ENCODE measurements at regions of chr19 and their contacts with region 1.

Region 1: DNA sequence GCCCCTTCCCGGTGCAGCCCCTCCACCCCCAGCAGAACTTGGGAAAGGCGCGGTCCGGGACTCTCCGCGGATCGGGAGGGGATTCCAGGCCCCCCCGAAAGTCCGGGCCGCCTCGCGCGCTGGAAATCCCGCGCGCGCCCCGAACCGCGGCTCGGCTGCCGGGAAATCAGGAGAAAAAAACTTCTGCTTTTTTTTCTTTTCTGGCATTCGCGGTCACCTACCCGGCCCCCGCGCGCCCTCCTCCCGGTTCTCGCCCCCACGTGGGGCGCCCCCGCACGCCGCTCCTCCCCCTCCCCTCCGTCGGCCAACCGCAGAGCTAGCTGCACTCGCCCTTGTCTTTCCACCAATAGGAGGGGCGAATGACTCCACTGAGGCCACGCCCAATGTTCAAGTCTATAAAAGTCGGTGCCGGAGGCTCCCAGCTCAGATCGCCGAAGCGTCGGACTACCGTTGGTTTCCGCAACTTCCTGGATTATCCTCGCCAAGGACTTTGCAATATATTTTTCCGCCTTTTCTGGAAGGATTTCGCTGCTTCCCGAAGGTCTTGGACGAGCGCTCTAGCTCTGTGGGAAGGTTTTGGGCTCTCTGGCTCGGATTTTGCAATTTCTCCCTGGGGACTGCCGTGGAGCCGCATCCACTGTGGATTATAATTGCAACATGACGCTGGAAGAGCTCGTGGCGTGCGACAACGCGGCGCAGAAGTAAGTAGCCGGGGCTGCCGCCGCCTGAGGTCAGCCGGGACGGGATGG is at the start of gene GADD45B:
- DNase-seq: peak; percentile 97 to 98
- ATAC-seq: peak; percentile 76 to 85 (median 82)
- H3K4me3 ChIP-seq: peak within 1 kb of the TSS; percentile 81
- H3K27ac ChIP-seq: peak within 1 kb of the TSS; percentile 84
- H3K4me1 ChIP-seq: peaks cover 24% of the 10 kb centered on the region
- H3K27me3 ChIP-seq: no peaks in the 10 kb centered on the region
- CTCF ChIP-seq: no peak
- total RNA-seq, gene GADD45B: 10.9 to 63.1 (median 25.6) TPM

Region 2: DNA sequence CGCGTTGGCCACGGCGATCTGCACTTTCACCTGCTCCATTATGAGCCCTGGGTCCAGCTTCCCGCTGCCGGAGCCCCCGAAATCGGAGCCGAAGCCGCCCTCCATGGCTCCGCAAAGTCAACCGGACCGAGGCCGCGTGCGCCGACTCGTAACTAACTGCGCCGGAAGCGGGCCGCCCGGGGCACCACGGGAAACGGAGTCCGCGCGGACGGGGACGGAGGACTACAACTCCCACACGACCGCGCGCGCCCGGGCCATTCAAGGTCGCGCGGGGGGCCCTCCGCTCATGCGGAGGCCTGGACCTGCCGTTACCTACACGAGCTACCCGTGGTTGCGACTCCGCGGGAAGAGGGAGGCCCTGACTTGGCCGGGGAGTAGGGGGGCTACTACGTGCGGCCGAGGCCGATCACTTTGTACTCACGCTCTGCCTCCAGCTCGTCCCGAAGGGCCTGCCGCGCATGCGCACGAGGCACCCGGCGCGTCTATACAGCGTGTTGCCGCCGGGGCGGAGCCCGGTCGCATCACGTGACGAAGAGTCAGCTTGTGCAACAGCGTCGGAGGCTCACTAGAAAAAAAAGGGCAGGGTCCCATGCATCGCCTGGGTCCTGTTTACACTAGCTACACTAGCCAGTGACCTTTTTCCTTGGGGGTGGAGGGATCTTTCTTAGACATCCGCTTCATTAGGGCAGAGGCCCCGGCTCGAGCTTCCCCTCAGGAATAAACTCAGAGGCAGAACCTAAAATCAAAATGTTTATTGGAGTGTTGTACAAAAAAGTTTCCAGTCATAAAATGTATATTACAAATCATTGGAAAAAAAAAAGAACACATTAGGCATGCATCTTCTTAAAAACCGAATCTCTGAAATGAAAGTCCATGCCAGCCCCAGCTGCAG is 48.2 kb before region 1 on chr19 and contains the start of gene TIMM13:
- intact Hi-C with region 1: no loop called
- DNase-seq: peak; percentile 97 to 99
- ATAC-seq: peak; percentile 90 to 94 (median 92)
- H3K4me3 ChIP-seq: peak within 1 kb of the TSS; percentile 98
- H3K27ac ChIP-seq: peak within 1 kb of the TSS; percentile 96
- H3K4me1 ChIP-seq: peaks cover 32% of the 10 kb centered on the region
- H3K27me3 ChIP-seq: no peaks in the 10 kb centered on the region
- CTCF ChIP-seq: no peak
- total RNA-seq, gene TIMM13: 70.3 to 110 (median 92.2) TPM

Region 3: DNA sequence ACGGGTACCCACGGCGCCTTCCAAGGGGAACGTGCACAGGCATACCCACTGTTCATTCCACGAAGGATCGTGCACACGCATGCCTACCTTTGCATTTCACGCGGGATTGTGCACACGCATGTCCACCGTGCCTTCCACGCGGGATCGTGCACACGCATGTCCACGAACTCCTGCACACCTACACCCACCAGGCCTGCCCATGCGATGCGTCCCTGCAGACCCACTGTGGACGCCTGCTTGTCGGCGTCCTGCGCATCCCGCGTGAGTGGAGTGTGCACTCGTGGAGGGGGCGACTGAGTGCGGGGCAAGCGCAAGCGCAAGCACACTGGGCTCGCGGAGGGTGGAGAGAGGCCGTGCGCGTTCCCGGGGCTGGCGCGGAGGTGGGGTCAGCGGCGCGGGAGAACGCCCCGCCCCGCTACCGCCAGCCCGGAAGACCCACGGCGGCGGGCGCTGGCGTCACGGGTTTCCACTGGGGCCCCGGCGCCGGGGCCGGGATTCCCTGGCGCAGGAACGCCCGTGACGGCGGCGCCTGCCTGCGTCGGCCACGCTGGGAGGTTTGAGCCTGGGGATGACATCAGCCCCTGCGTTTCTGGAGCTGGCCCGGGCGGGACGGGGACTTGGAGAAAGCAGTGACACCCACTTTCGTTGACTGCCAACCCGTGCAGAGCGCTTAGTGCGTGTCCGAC is 18.7 kb after region 1 on chr19:
- intact Hi-C with region 1: loop called in 1 of 2 experiments (anchors 2 kb)
- DNase-seq: peak; percentile 83 to 88
- ATAC-seq: peak; percentile 31 to 64 (median 44)
- H3K4me3 ChIP-seq: peak overlapping the region; percentile 55
- H3K27ac ChIP-seq: peak overlapping the region; percentile 92
- H3K4me1 ChIP-seq: peaks cover 35% of the 10 kb centered on the region
- H3K27me3 ChIP-seq: no peaks in the 10 kb centered on the region
- CTCF ChIP-seq: no peak

Region 4: GRCh38 chr19:2543463-2544442 is 67.9 kb after region 1 on chr19:
- intact Hi-C with region 1: loop called (anchors 2 to 5 kb)
- DNase-seq: peak; percentile 97
- ATAC-seq: peak; percentile 76 to 84 (median 81)
- H3K4me3 ChIP-seq: peak overlapping the region; percentile 26
- H3K27ac ChIP-seq: peak overlapping the region; percentile 90
- H3K4me1 ChIP-seq: peaks cover 63% of the 10 kb centered on the region
- H3K27me3 ChIP-seq: no peaks in the 10 kb centered on the region
- CTCF ChIP-seq: peak; percentile 26

Region 5: DNA sequence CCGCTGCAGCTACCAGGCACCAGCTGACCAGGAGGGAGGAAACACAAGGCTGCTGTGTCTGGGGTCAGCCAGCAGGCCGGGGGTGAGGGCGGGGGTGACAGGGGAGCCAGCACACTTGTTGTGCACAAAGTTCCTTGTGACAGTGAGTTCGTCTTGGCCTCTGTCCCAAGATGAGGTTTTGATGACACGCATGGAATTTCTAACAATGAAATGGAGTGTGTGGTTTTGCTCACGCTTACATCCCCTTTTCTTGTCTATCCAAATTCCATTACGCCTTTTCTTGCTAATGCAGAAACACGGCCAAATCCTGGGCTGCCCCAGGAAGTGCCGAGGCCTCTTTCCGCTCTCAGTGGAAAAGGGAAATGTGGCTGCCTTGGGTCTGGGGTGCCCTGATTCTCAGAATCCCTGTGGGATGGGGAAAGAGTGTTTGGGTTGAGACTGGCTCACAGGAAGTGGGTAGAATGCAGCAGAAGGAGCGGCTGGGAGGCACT is 73.9 kb after region 1 on chr19:
- intact Hi-C with region 1: loop called in 1 of 2 experiments (anchors 5 kb)
- DNase-seq: peak; percentile 82 to 88
- ATAC-seq: peak in 2 of 4 donors; percentile 2 to 21
- H3K4me3 ChIP-seq: no peak overlapping the region
- H3K27ac ChIP-seq: peak overlapping the region; percentile 58
- H3K4me1 ChIP-seq: peaks cover 32% of the 10 kb centered on the region
- H3K27me3 ChIP-seq: no peaks in the 10 kb centered on the region
- CTCF ChIP-seq: no peak

Region 6: GRCh38 chr19:2578901-2579677 is 103.2 kb after region 1 on chr19:
- intact Hi-C with region 1: loop called (anchors 1 to 2 kb)
- DNase-seq: peak; percentile 87 to 94
- ATAC-seq: peak; percentile 84 to 92 (median 88)
- H3K4me3 ChIP-seq: peak overlapping the region; percentile 67
- H3K27ac ChIP-seq: peak overlapping the region; percentile 74
- H3K4me1 ChIP-seq: peaks cover 17% of the 10 kb centered on the region
- H3K27me3 ChIP-seq: no peaks in the 10 kb centered on the region
- CTCF ChIP-seq: peak; percentile 91

Region 7: DNA sequence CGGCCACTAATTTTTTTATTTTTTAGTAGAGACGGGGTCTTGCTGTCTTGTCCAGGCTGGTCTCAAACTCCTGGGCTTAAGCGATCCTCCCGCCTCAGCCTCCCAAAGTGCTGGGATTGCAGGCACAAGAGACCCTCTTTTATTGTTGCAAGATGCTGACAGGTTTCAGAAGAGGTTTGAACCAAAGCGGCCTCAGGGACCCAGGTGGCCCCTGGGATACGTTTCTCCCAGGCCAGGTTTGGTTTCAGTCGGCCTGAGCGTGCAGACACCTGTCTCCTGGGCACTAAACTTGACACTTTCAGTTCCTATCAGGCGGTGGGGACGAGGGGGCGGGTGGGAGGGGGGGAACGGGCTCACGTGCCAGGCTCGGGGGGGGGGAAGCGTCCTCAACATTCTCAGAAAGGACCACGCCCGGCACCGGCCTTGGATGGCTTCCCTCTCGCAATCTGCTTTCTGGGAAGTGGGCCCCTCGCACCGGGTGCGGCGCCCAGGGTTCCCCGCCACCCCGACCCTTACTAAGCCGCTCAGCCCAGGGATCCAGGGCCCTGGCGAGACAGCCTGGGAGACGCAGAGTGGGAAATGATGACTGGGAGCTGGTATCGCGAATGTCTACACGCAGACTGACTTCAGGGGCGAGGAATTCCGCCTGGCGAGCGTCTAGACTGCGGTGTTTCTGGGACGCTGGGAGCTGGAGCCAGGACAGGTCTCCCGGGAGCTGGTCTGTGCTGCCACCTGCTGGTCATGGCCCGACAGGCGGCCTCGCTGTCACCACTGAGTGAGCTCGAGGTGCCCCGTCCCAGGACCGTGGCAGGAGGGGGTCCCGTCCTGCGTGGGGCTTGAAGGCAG is 135.0 kb after region 1 on chr19:
- intact Hi-C with region 1: loop called (anchors 1 to 2 kb)
- DNase-seq: peak; percentile 93 to 96
- ATAC-seq: peak; percentile 91 to 99 (median 97)
- H3K4me3 ChIP-seq: peak overlapping the region; percentile 67
- H3K27ac ChIP-seq: peak overlapping the region; percentile 76
- H3K4me1 ChIP-seq: no peaks in the 10 kb centered on the region
- H3K27me3 ChIP-seq: no peaks in the 10 kb centered on the region
- CTCF ChIP-seq: peak; percentile 98

Measured in psoas muscle (tissue), 8 donors.